ENCODE measurements at regions of chr7 and their contacts with region 1.

Region 1: DNA sequence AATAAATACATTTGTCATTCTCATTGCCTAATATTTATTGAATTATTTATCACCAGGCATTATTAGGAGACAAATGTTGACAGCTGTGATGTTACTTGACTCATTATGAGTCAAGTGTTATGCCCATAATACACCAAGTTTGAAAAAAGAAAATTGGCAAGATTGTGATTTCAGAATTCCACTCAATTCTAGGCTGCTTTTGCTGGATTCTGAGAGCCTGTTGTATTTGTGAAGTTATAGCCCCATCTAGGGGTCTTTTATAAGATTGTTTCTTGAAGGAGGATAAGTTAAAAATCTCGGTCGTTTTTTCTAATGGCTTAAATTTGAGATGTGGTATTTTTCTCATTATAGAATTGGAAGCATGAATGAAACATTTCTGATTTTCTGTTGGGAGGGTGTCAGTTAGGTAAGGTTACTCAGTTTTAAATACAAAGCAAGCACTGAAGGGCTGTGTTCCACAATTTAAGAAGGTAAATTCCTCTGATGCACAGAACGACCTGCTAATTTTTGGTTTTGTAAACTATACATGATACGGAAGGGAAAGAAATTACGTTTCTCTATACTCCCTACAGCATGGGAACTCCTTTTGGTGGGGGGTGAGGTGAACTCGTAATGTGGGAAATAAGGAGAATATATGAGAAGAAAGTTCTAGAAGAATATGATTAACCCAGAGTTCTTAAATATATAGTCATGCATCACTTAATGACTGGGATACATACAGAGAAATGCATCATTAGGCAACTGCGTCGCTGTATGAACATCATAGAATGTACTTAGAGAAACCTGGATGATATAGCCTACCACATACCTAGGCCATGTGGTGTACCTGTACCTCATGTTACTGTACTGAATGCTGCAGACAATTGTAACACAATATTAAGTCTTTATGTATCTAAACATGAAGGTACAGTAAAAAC is 2.6 kb downstream of the STK31 start:
- DNase-seq: peak in 7 of 9 donors; percentile 11 to 48 (median 37)
- ATAC-seq: peak; percentile 45
- H3K4me3 ChIP-seq: no peak overlapping the region
- H3K4me3 Mint-ChIP-seq: no peak overlapping the region
- H3K27ac ChIP-seq: no peak overlapping the region
- H3K27ac Mint-ChIP-seq: no peak overlapping the region
- H3K4me1 ChIP-seq: no peaks in the 10 kb centered on the region
- H3K4me1 Mint-ChIP-seq: peaks cover 0 to 2% (median 0%) of the 10 kb centered on the region in 7 donors
- H3K27me3 ChIP-seq: no peaks in the 10 kb centered on the region
- H3K27me3 Mint-ChIP-seq: peaks cover 0 to 4% (median 0%) of the 10 kb centered on the region in 5 donors

Region 2: DNA sequence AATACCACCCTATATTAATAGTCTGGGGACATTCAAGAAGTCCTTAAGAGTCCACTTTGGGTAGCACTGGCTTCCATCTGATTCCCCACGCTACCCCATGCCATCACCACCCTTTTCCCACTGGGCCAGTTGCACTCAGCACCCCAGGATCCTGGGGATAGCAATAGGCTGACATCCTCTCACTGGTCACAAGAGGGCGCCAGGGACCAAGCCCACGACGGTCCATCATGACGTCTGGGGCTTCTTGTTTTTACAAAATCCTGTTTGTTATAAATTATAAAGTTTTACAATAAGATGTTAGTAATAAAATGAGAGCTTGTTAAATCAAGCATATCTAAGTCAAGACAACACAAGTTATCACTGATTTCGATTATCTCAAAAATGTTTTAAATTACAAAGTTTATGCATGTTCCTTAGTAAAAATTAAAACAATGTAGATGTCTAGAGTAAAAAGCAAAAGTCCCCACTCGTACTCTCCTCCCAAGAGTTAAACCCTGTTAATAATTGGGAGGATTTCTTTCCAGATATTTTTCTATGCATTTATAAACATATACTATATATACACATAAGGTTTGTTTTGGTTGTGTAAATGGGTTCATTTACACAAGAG is 450.7 kb before region 1 on chr7:
- CTCF ChIA-PET with region 1: interaction called, 3 read pairs
- POLR2A ChIA-PET with region 1: no interaction called
- intact Hi-C with region 1: loop called in 1 of 2 experiments (anchors 2 kb)
- DNase-seq: peak; percentile 18 to 54 (median 43)
- ATAC-seq: peak; percentile 92
- H3K4me3 ChIP-seq: no peak overlapping the region
- H3K4me3 Mint-ChIP-seq: no peak overlapping the region
- H3K27ac ChIP-seq: no peak overlapping the region
- H3K27ac Mint-ChIP-seq: no peak overlapping the region
- H3K4me1 ChIP-seq: peaks cover 0 to 3% of the 10 kb centered on the region in 2 donors
- H3K4me1 Mint-ChIP-seq: no peaks in the 10 kb centered on the region
- H3K27me3 ChIP-seq: no peaks in the 10 kb centered on the region
- H3K27me3 Mint-ChIP-seq: peaks cover 0 to 20% (median 0%) of the 10 kb centered on the region in 5 donors

Region 3: DNA sequence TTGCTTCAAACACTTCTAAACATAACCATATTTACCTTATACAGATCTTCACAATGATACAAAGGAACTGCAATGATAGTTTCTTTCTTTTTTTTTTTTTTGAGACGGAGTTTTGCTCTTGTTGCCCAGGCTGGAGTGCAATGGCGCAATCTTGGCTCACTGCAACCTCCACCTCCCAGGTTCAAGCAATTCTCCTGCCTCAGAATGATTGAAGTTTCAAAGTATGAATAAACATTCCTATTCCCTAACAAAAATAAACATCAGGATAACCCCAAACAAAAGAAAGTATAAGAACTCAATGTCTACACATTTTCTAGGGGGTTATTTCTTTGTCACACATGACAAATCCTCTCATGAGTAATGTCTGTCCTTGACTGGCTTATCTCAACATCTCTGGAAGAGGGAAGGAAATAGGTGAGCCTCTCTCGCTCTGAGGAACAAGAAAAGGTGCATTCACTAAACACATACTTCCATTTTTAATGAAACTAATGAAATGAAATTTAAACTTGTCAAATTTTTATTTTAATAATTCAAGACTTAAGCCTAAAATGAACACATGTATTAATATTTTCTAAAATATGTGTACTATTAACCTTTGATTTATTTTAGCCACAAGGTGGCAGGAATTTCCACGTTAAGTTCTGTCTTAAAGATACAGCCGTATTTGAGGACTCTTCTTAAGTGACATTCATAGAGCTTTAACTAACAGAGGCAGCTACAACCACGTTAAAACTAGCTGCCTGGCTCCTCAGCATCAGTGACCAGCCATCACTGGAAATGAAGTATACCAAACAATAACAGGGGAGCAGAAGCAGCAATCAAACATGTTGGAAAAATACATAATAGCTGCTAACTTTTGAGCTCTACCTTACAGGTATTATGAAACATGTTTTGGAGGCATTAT is 355.2 kb before region 1 on chr7:
- CTCF ChIA-PET with region 1: no interaction called
- POLR2A ChIA-PET with region 1: no interaction called
- intact Hi-C with region 1: loop called in 1 of 2 experiments (anchors 2 kb)
- DNase-seq: peak in 4 of 9 donors; percentile 17 to 37 (median 22)
- ATAC-seq: peak; percentile 55
- H3K4me3 ChIP-seq: no peak overlapping the region
- H3K4me3 Mint-ChIP-seq: peak overlapping the region in 2 of 10 donors; percentile 3 to 51
- H3K27ac ChIP-seq: no peak overlapping the region
- H3K27ac Mint-ChIP-seq: no peak overlapping the region
- H3K4me1 ChIP-seq: peaks cover 5 to 6% of the 10 kb centered on the region in 2 donors
- H3K4me1 Mint-ChIP-seq: peaks cover 5 to 19% (median 14%) of the 10 kb centered on the region in 7 donors
- H3K27me3 ChIP-seq: no peaks in the 10 kb centered on the region
- H3K27me3 Mint-ChIP-seq: peaks cover 0 to 47% (median 12%) of the 10 kb centered on the region in 5 donors

Region 4: GRCh38 chr7:23431702-23432199 is 280.9 kb before region 1 on chr7:
- CTCF ChIA-PET with region 1: interaction called, 3 read pairs
- POLR2A ChIA-PET with region 1: no interaction called
- intact Hi-C with region 1: loop called (anchors 1 to 5 kb)
- DNase-seq: no peak
- ATAC-seq: no peak
- H3K4me3 ChIP-seq: no peak overlapping the region
- H3K4me3 Mint-ChIP-seq: no peak overlapping the region
- H3K27ac ChIP-seq: no peak overlapping the region
- H3K27ac Mint-ChIP-seq: no peak overlapping the region
- H3K4me1 ChIP-seq: no peaks in the 10 kb centered on the region
- H3K4me1 Mint-ChIP-seq: no peaks in the 10 kb centered on the region
- H3K27me3 ChIP-seq: no peaks in the 10 kb centered on the region
- H3K27me3 Mint-ChIP-seq: peaks cover 20 to 33% (median 26%) of the 10 kb centered on the region in 5 donors

Region 5: GRCh38 chr7:23546897-23547572 is 165.6 kb before region 1 on chr7:
- CTCF ChIA-PET with region 1: interaction called, 8 read pairs
- POLR2A ChIA-PET with region 1: no interaction called
- intact Hi-C with region 1: loop called (anchors 1 kb)
- DNase-seq: peak; percentile 37 to 89 (median 82)
- ATAC-seq: peak; percentile 98
- H3K4me3 ChIP-seq: no peak overlapping the region
- H3K4me3 Mint-ChIP-seq: no peak overlapping the region
- H3K27ac ChIP-seq: no peak overlapping the region
- H3K27ac Mint-ChIP-seq: peak overlapping the region in 6 of 9 donors; percentile 22 to 90 (median 40)
- H3K4me1 ChIP-seq: no peaks in the 10 kb centered on the region
- H3K4me1 Mint-ChIP-seq: peaks cover 0 to 14% (median 5%) of the 10 kb centered on the region in 7 donors
- H3K27me3 ChIP-seq: no peaks in the 10 kb centered on the region
- H3K27me3 Mint-ChIP-seq: peaks cover 0 to 5% (median 0%) of the 10 kb centered on the region in 5 donors

Region 6: GRCh38 chr7:23654508-23654907 is 58.1 kb before region 1 on chr7:
- CTCF ChIA-PET with region 1: interaction called, 5 read pairs
- POLR2A ChIA-PET with region 1: no interaction called
- intact Hi-C with region 1: loop called in 1 of 2 experiments (anchors 1 kb)
- DNase-seq: no peak
- ATAC-seq: no peak
- H3K4me3 ChIP-seq: no peak overlapping the region
- H3K4me3 Mint-ChIP-seq: no peak overlapping the region
- H3K27ac ChIP-seq: no peak overlapping the region
- H3K27ac Mint-ChIP-seq: no peak overlapping the region
- H3K4me1 ChIP-seq: no peaks in the 10 kb centered on the region
- H3K4me1 Mint-ChIP-seq: peaks cover 0 to 1% (median 0%) of the 10 kb centered on the region in 7 donors
- H3K27me3 ChIP-seq: no peaks in the 10 kb centered on the region
- H3K27me3 Mint-ChIP-seq: no peaks in the 10 kb centered on the region

Region 7: DNA sequence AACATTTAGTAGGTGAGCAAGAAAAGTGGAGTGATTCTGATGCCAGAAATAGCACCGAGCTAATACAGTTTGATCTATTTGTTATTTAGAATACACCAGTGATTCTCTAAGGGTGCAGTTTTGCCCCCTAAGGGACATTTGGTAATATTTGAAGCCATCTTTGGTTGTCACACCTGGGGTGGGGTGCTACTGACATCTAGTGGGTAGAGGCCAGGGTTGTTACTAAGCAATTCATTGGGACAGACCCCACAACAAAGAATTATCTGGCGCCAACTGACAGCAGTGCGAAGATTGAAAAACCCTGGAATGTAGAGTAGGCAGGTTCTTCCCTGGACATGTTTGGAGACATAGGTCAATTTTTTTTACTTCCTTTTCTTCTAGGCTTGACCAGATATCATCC is 875.2 kb after region 1 on chr7:
- CTCF ChIA-PET with region 1: no interaction called
- POLR2A ChIA-PET with region 1: no interaction called
- intact Hi-C with region 1: loop called in 1 of 2 experiments (anchors 5 kb)
- DNase-seq: peak in 8 of 9 donors; percentile 21 to 70 (median 63)
- ATAC-seq: peak; percentile 88
- H3K4me3 ChIP-seq: no peak overlapping the region
- H3K4me3 Mint-ChIP-seq: no peak overlapping the region
- H3K27ac ChIP-seq: no peak overlapping the region
- H3K27ac Mint-ChIP-seq: peak overlapping the region in 2 of 9 donors; percentile 0 to 26
- H3K4me1 ChIP-seq: no peaks in the 10 kb centered on the region
- H3K4me1 Mint-ChIP-seq: peaks cover 7 to 40% (median 27%) of the 10 kb centered on the region in 7 donors
- H3K27me3 ChIP-seq: no peaks in the 10 kb centered on the region
- H3K27me3 Mint-ChIP-seq: no peaks in the 10 kb centered on the region

Measured in naive thymus-derived CD4-positive, alpha-beta T cell (primary cell).